Cardiac septum (tissue), 1 donor: ENCODE measurements at regions of chr17 and their contacts with region 1.

Region 1: DNA sequence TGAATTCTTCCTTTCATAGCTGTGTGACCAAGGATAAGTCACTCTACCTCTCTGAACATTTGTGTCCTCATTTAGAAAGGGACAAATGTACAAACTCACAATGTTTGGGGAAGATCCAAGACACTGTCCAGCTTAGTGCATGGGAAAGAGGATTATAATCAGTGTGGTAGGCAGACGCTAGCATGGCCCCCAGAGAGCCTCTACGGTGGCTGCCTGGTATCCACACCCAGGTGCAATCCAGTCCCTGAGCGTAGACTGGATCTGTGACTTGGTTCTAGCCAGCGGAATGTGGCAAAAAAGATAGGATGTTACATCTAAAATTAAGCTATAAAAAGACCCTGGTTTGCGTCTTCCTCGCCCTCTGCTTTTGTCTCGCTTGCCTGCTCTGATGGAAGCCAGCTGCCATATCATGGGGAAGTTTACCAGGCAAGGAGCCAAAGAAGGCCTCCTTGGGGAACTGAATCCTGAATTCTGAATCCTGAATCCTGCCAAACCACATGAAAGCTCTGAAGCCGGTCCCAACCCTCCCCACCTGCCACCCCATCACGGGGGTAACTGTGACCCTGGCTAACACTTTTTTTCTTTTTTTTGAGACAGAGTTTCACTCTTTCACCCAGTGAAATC is 51.7 kb downstream of the PLXDC1 start:
- DNase-seq: no peak

Region 2: DNA sequence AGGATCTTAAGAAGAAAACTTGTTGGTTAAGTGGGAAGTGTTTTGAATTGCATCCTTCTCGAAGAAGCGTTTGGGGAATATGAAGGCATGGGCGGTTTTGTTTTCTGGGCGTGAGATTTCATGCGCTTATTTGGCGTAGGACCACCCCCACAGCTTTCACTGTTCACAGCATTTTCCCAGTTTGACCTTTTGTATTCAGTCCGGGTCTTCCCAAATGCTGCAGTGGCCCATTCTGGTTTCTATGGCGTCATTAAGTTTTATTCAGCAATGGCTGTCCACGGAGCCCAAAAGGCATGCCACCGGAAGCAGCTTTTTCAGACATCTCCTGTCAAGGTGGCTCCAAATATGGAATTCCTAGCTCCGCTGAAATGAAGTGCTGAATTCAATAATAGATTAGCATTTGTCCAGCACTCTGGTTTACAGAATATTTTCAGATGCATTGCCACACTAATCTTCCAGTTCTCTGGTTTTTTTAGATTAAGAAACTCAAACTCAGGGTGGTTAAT is 42.0 kb before region 1 on chr17:
- intact Hi-C with region 1: no loop called
- DNase-seq: peak; percentile 68

Region 3: GRCh38 chr17:39144416-39144840 is 44.7 kb after region 1 on chr17:
- intact Hi-C with region 1: loop called (anchors 5 kb)
- DNase-seq: peak; percentile 85